Sciatic nerve (tissue), 2 donors: ENCODE measurements at regions of chr12 and their contacts with region 1.

Region 1: GRCh38 chr12:64181504-64182291 is 40.4 kb downstream of the KICS2 start:
- DNase-seq: no peak
- ATAC-seq: peak; percentile 95

Region 2: DNA sequence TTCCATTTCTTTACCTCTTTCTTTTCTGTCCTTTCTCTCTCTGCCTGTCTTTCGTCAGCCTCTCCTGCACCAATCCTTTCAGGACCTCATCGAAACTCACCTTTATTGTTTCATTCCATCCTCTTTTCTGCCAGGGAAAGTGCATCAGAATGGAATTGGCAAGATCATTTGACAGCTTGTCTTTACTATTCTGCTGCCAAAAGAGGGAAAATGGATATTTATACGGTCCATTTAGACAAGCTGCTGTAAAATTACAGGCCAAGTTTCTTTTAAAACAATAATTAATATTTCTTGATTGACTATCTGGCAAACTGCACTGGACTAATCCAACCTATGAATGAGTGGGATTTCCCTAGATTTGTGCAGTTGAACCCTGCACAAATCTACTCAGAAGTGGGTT is 344.8 kb before region 1 on chr12:
- intact Hi-C with region 1: loop called (anchors 5 kb)
- DNase-seq: no peak
- ATAC-seq: no peak

Region 3: GRCh38 chr12:64240781-64241180 is 59.1 kb after region 1 on chr12:
- intact Hi-C with region 1: loop called (anchors 10 kb)
- DNase-seq: no peak
- ATAC-seq: no peak